Activated CD4-positive, alpha-beta memory T cell treated with anti-CD3 and anti-CD28 coated beads for 36 hours (primary cell): ENCODE measurements at regions of chr12 and their contacts with region 1.

Region 1: DNA sequence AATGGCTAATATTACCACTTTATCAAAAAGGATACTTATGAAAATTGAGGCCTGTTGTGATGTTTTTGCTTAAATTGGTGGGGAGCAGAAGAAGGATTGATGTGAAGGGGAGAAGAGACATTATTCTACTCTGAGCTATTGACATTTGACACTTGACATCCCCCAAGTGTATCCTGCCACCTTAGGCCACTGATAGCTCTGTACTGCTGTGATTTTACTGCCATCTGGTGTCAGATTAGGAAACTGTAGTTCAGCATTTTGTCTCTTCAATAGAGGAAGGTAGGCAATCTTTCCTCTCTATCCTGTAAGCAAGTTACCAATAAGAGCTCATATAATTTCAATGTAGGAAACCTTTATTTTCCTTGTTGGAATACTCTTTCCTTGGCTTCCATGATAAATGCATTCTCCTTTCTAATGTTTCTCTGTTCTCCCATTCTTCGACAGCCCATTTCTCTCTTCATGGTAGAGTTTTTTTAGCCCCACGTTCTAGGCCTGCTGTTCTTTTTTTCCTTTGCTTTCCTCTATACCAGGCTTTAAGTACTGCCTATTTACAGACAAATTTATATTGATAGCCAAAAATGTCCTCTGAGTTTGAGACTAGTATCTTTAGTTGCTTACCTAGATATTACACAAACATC is 46.3 kb downstream of the PPHLN1 start:
- DNase-seq: no peak
- H3K4me3 Mint-ChIP-seq: no peak overlapping the region
- H3K27ac Mint-ChIP-seq: no peak overlapping the region
- H3K4me1 Mint-ChIP-seq: peaks cover 7% of the 10 kb centered on the region
- H3K27me3 Mint-ChIP-seq: no peaks in the 10 kb centered on the region

Region 2: GRCh38 chr12:41264281-41264680 is 1108.0 kb before region 1 on chr12:
- CTCF ChIA-PET with region 1: no interaction called
- POLR2A ChIA-PET with region 1: no interaction called
- intact Hi-C with region 1: loop called (anchors 10 kb)
- DNase-seq: no peak
- H3K4me3 Mint-ChIP-seq: no peak overlapping the region
- H3K27ac Mint-ChIP-seq: no peak overlapping the region
- H3K4me1 Mint-ChIP-seq: no peaks in the 10 kb centered on the region
- H3K27me3 Mint-ChIP-seq: no peaks in the 10 kb centered on the region

Region 3: DNA sequence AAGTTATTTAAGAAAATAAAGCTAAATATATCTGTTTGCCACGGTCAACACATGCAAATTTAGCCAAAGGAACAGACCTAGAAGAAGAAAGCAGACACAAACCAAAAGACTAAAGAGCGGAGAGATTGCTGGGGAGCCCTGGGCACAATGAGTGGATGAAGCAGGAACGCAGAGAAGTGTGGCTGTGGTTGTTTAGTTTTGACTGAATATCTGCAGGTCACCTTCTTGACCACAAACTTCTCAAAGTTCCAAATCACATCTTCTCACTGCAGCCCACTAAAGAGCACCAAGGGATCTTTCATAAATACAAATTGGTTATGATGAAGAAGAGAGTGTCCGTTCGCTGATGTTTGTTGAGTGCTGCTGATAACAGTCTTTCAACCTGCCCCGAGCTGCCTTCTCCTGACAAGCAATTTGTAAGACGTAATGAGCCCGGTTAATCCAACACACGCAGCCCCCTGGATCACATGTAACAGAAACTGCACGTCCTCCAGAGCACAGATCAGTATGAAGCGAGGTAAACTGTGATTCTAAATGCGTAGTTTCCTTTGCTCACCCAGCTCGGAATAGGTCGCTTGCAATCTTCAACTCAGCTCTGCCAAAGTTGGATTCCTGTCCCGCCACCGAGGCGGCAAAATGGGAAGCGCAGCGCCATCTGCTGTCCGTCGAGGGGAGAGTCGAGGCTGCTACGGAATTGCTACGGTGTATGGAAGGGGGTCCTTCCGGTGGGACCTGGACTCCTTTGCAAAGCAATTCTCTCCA is 348.4 kb before region 1 on chr12:
- CTCF ChIA-PET with region 1: interaction called, 10 read pairs
- POLR2A ChIA-PET with region 1: no interaction called
- intact Hi-C with region 1: loop called (anchors 10 kb)
- DNase-seq: peak; percentile 80
- H3K4me3 Mint-ChIP-seq: peak overlapping the region; percentile 54
- H3K27ac Mint-ChIP-seq: no peak overlapping the region
- H3K4me1 Mint-ChIP-seq: peaks cover 8% of the 10 kb centered on the region
- H3K27me3 Mint-ChIP-seq: peaks cover 10% of the 10 kb centered on the region

Region 4: DNA sequence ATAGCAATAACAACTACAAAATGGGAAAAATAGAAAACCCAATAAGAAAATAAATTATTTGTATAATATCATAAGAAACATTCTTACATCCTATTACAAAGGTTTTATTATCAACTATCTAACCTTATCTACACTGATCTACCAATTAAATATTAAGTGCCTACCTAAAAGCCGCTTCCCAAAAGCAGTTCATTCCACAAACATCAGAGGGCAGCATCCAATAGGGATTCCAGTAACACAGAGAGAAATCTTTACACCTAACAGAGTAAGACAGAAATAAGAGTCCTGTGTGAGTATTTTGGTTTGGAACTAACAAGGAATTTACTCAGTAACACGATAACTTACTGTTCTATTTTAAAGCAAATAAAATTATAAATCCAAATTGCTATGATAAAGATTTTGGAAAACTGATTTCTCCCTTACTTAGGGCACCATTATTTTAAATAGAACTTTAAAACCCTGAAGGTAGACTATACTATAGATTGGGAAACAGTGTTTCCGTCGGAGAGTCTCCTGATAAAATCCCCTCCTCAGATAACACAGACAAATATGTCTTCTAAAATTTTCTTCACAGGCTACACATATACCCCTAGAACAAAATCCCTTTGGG is 242.6 kb before region 1 on chr12:
- CTCF ChIA-PET with region 1: interaction called, 10 read pairs
- POLR2A ChIA-PET with region 1: no interaction called
- intact Hi-C with region 1: loop called (anchors 1 kb)
- DNase-seq: no peak
- H3K4me3 Mint-ChIP-seq: no peak overlapping the region
- H3K27ac Mint-ChIP-seq: no peak overlapping the region
- H3K4me1 Mint-ChIP-seq: peaks cover 30% of the 10 kb centered on the region
- H3K27me3 Mint-ChIP-seq: no peaks in the 10 kb centered on the region

Region 5: DNA sequence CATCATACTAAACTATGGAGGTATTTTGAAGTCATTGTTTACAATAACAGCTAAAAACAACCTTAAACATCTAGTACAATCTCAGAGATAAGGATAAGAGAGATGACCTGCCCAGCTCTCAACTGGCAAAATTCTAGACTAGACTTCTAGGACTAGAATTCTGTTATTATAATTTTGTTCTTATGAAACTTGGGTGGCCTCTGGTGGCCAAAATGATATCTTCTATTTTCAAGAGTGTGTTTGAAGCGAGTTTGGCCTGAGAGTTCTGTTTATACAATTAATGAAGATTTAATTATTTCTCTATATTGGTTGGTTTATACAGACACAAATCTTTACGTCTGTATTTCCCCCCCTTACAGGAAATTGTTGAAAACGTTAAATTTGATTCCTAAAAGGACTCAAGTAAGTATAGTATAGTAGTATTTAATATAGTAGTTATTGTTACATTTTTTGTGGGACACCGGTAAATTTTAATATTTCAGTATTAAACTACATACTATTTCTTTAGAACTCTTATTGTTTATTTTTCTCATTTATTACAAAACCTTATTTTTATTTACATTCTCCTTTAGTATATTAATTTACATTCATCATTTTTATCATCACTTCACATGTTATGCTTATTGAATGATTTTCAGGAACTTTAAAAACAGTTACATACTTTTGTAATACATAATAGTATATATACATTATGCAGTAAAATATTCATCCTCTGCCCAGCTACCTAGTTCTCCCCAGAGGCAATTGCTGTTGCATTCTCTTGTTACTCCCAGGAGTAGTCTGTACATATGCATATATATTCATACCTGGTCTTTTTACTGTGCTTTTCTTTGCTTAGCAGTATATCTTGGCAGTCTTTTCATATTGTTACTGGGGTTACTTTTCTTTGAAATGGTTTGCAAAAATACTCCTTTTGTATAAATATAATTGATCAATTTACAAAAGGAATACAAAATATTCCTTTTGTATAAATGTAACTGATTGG is 39.7 kb before region 1 on chr12:
- CTCF ChIA-PET with region 1: interaction called, 15 read pairs
- POLR2A ChIA-PET with region 1: no interaction called
- intact Hi-C with region 1: loop called (anchors 2 kb)
- DNase-seq: no peak
- H3K4me3 Mint-ChIP-seq: no peak overlapping the region
- H3K27ac Mint-ChIP-seq: no peak overlapping the region
- H3K4me1 Mint-ChIP-seq: peaks cover 51% of the 10 kb centered on the region
- H3K27me3 Mint-ChIP-seq: no peaks in the 10 kb centered on the region

Region 6: GRCh38 chr12:42346403-42347002 is 25.8 kb before region 1 on chr12:
- CTCF ChIA-PET with region 1: interaction called, 13 read pairs
- POLR2A ChIA-PET with region 1: no interaction called
- intact Hi-C with region 1: no loop called
- DNase-seq: no peak
- H3K4me3 Mint-ChIP-seq: no peak overlapping the region
- H3K27ac Mint-ChIP-seq: no peak overlapping the region
- H3K4me1 Mint-ChIP-seq: peaks cover 28% of the 10 kb centered on the region
- H3K27me3 Mint-ChIP-seq: no peaks in the 10 kb centered on the region

Region 7: DNA sequence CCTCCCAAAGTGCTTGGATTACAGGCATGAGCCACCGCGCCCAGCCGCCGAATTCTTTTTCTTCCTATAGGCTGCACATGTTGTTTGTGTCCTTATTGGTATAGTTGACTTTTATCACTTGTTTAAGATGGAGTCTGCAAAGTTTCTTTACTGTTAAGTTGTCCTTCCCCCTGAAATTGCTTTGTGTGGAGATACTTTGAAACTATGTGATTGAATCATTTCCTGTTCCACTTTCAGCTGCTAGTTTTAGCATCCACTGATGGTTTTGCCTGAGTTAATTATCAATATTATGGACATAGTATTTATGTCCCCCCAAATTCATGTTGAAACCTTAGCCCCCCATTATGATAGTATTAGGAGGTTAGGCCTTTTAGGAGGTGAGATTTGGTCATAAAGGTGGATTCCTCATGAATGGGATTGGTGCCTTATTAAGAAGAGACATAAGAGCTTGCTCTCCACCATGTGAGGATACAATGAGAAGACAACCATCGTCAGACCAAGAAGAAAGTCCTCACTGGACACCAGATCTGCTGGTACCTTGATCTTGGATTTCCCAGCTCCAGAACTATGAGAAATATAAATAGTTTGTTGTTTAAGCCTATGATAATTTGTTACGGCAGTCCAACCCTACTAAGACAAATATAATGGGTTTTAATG is 11.4 kb before region 1 on chr12:
- CTCF ChIA-PET with region 1: interaction called, 15 read pairs
- POLR2A ChIA-PET with region 1: no interaction called
- intact Hi-C with region 1: no loop called
- DNase-seq: no peak
- H3K4me3 Mint-ChIP-seq: no peak overlapping the region
- H3K27ac Mint-ChIP-seq: peak overlapping the region; percentile 50
- H3K4me1 Mint-ChIP-seq: peaks cover 38% of the 10 kb centered on the region
- H3K27me3 Mint-ChIP-seq: no peaks in the 10 kb centered on the region